ENCODE measurements at regions of chr11 and their contacts with region 1.

Region 1: DNA sequence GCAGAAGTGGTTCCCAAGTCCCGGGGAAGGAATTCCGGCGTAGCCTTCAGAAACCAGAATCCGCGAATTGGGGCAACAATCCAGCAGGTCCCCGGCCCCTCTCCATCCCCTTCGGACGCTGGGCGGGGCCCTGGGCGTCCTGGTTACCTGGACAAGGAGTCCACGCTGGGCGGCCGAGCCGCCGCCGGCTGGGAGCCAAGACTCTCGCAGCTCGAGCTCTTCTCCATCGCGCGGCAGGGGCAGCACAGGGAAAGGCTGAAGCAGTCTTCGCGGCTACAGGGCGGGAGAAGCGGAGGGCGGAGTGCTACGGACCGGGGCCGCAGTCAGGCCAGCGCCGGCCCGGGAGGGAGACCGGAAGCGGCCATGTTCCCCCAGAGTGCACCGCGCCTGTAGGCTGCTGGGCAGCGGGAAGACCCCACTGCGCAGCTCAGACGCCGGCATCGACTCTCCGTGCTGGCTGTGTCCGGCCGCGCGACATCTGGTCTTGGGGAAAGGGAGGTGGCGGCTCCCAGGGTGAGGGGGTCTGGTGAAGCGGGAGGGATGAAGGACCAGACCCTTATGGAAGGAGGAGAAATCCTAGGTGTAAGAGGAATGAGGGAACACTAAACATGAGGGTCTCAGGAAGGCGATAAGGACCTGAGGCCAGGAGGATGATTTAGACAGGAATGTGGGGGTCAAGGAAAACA is at the start of gene MTMR2:
- DNase-seq: peak; percentile 54 to 66
- ATAC-seq: peak; percentile 91 to 92
- H3K4me3 ChIP-seq: peak within 1 kb of the TSS; percentile 75 to 97 (median 87)
- H3K27ac ChIP-seq: peak within 1 kb of the TSS; percentile 91 to 93 (median 92)
- H3K4me1 ChIP-seq: peaks cover 10 to 18% of the 10 kb centered on the region in 2 donors
- H3K27me3 ChIP-seq: no peaks in the 10 kb centered on the region
- CTCF ChIP-seq: no peak
- POLR2A ChIP-seq: peak; percentile 51 to 67
- total RNA-seq, gene MTMR2: 4.0 to 5.3 (median 4.5) TPM

Region 2: GRCh38 chr11:96054870-96055705 is 131.2 kb after region 1 on chr11:
- in situ Hi-C with region 1: no loop called
- intact Hi-C with region 1: no loop called
- DNase-seq: no peak
- ATAC-seq: no peak
- H3K4me3 ChIP-seq: no peak overlapping the region
- H3K27ac ChIP-seq: no peak overlapping the region
- H3K4me1 ChIP-seq: peaks cover 0 to 6% of the 10 kb centered on the region in 2 donors
- H3K27me3 ChIP-seq: no peaks in the 10 kb centered on the region
- CTCF ChIP-seq: peak; percentile 38 to 55 (median 46)
- POLR2A ChIP-seq: no peak

Region 3: GRCh38 chr11:96389720-96390487 is 466.0 kb after region 1 on chr11 and contains the starts of genes CCDC82 and JRKL:
- in situ Hi-C with region 1: no loop called
- intact Hi-C with region 1: loop called (anchors 10 kb)
- DNase-seq: peak; percentile 95 to 96
- ATAC-seq: peak; percentile 94 to 95
- H3K4me3 ChIP-seq: peak within 1 kb of the TSS; percentile 81 to 93 (median 92)
- H3K27ac ChIP-seq: peak within 1 kb of the TSS; percentile 87 to 95 (median 91)
- H3K4me1 ChIP-seq: peaks cover 14 to 19% of the 10 kb centered on the region in 2 donors
- H3K27me3 ChIP-seq: no peaks in the 10 kb centered on the region
- CTCF ChIP-seq: no peak
- POLR2A ChIP-seq: peak; percentile 89 to 90
- total RNA-seq, gene CCDC82: 4.6 to 9.1 (median 6.6) TPM
- total RNA-seq, gene JRKL: 2.9 to 5.8 (median 3.6) TPM

Region 4: GRCh38 chr11:96607890-96608558 is 684.2 kb after region 1 on chr11:
- in situ Hi-C with region 1: no loop called
- intact Hi-C with region 1: no loop called
- DNase-seq: no peak
- ATAC-seq: no peak
- H3K4me3 ChIP-seq: no peak overlapping the region
- H3K27ac ChIP-seq: no peak overlapping the region
- H3K4me1 ChIP-seq: no peaks in the 10 kb centered on the region
- H3K27me3 ChIP-seq: no peaks in the 10 kb centered on the region
- CTCF ChIP-seq: no peak
- POLR2A ChIP-seq: no peak